AG04449 (cell line): ENCODE measurements at regions of chr17 and their contacts with region 1.

Region 1: DNA sequence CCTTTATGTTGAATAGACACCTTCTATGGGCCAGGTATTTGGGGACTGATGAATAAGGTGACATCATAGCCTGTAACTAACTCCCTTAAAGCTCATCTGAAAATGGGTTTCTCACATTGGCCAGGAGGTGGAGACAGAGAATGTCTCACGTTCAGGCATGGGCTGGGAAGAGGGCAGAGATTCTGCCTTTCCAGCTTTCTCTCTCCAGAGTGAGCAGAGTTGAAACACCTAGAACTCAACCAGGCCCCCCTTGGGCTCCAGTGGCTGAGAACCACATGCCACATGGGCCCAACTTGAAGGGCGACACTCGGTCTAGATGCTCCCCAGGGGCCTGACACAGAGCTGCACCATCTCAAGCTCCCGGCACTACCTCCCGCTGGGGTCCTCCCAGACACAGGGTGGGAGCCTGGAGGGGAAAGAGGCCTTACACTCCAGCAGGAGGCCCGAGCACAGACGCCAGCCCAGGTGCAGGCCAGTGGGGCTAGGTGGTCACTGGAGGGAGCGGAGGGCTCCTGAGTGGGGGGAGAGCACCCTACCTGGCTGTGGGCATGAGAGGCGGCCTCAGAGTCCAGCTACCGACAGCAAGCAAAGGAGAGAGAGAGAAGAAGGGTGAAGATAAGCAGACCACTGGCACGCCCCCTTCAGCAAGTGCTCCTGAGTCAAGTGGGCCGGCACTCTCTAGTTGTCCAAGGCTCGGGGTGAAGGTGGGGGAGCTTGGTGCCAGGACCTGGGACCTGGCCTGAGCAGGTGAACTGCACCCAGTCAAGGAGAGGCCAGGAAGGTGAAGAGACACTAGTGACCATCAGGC is 55.9 kb downstream of the MYO18A start:
- DNase-seq: no peak
- H3K4me3 ChIP-seq: no peak overlapping the region
- CTCF ChIP-seq: peak; percentile 72

Region 2: GRCh38 chr17:28878981-28879380 is 245.3 kb before region 1 on chr17:
- CTCF ChIA-PET with region 1: no interaction called
- POLR2A ChIA-PET with region 1: no interaction called
- DNase-seq: no peak
- H3K4me3 ChIP-seq: no peak overlapping the region
- CTCF ChIP-seq: peak; percentile 63

Region 3: GRCh38 chr17:28967221-28968140 is 156.8 kb before region 1 on chr17:
- CTCF ChIA-PET with region 1: interaction called, 1,065 read pairs
- POLR2A ChIA-PET with region 1: no interaction called
- DNase-seq: no peak
- H3K4me3 ChIP-seq: no peak overlapping the region
- CTCF ChIP-seq: no peak

Region 4: DNA sequence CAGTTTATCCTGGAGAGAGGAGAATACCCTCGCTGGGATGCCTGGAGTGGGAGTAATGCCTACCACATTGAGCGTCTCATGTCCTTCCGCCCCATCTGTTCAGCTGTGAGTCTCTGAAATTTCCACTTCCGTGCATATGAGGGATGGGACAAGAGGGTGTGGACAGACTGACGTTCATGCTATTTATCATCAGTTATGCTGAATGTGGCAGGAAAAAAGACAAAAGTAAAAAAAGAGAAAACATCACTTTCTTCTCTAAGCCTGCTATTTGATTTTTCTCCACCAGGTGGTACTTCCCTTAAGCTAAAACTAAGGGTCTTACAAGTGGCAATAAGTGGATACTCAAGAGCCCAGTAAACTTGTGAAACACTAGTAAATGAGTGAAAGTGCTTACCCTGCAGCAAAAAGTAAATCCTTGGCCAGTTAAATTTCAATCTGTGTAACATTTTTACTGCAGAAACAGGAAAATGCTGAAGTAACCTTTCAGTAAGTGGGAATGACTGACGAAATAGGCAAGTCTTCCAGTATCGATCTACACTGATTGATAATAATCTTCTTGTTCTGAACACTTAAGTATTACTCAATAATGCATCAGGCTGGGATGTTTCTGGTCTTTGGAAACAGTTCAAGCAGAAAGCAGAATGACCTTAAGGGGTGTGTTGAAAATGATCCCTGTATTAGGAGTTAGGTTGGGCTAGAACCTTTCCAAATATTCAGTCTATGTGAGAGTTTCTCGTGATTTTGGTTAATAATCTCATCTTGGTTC is 128.0 kb after region 1 on chr17:
- CTCF ChIA-PET with region 1: interaction called, 13 read pairs
- POLR2A ChIA-PET with region 1: no interaction called
- DNase-seq: no peak
- H3K4me3 ChIP-seq: no peak overlapping the region
- CTCF ChIP-seq: no peak

Region 5: DNA sequence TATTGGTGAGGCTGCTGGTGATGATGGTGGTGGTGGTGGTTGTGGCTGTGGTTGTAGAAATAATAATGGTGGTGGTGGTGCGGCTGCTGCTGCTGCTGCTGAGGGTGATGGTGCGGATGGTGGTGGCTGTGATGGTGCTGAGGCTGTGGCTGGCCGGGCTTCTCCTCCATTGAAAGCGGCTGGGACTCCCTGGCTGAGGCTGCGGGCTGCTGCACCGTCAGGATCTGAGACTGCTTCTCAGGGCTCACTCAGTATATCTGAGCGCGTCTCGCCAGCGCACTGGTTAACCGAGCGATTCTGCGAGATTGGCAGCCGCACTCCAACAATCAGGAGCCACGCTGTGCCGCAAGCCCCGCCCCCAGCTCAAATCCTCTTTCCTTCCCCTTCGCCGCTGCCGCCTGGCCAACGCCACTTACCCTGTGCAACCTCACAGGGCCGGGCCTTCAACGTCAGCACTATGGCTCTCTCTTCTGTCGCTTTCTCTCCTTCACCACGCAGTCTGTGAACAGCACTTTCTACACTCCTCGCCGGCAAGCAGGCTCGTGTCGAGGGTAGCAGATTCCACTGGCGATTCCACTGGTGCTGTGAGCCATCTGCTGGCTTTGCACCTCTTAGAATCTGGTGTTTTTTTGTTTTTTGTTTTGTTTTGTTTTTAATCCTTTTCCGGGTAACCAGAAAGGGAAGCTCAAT is 169.7 kb after region 1 on chr17 and contains the start of gene NUFIP2:
- CTCF ChIA-PET with region 1: interaction called, 12 read pairs
- POLR2A ChIA-PET with region 1: no interaction called
- DNase-seq: peak; percentile 83
- H3K4me3 ChIP-seq: peak within 1 kb of the TSS; percentile 99
- CTCF ChIP-seq: no peak